Activated CD4-positive, alpha-beta T cell treated with anti-CD3 and anti-CD28 coated beads, Interleukin-2, amount 10 ng/mL, durations not matched to agents 24 days and 14 days (primary cell): ENCODE measurements at regions of chr13 and their contacts with region 1.

Region 1: GRCh38 chr13:27953676-27954405 is 15.3 kb downstream of the CDX2 start:
- DNase-seq: peak; percentile 90
- H3K4me3 Mint-ChIP-seq: peak overlapping the region; percentile 80
- H3K27ac Mint-ChIP-seq: no peak overlapping the region
- H3K4me1 Mint-ChIP-seq: peaks cover 6% of the 10 kb centered on the region
- H3K27me3 Mint-ChIP-seq: peaks cover 63% of the 10 kb centered on the region

Region 2: GRCh38 chr13:27826379-27827353 is 127.2 kb before region 1 on chr13:
- intact Hi-C with region 1: no loop called
- DNase-seq: peak; percentile 90
- H3K4me3 Mint-ChIP-seq: peak overlapping the region; percentile 3
- H3K27ac Mint-ChIP-seq: no peak overlapping the region
- H3K4me1 Mint-ChIP-seq: peaks cover 8% of the 10 kb centered on the region
- H3K27me3 Mint-ChIP-seq: peaks cover 76% of the 10 kb centered on the region

Region 3: GRCh38 chr13:27926644-27927434 is 27.0 kb before region 1 on chr13:
- intact Hi-C with region 1: loop called (anchors 2 kb)
- DNase-seq: no peak
- H3K4me3 Mint-ChIP-seq: no peak overlapping the region
- H3K27ac Mint-ChIP-seq: peak overlapping the region; percentile 3
- H3K4me1 Mint-ChIP-seq: peaks cover 7% of the 10 kb centered on the region
- H3K27me3 Mint-ChIP-seq: peaks cover 91% of the 10 kb centered on the region